Aorta (tissue), 5 donors: ENCODE measurements at regions of chr4 and their contacts with region 1.

Region 1: GRCh38 chr4:85084380-85085094 is 118.0 kb upstream of the WDFY3 start:
- DNase-seq: no peak
- ATAC-seq: peak; percentile 72
- H3K4me3 ChIP-seq: no peak overlapping the region
- H3K27ac ChIP-seq: no peak overlapping the region
- H3K4me1 ChIP-seq: no peaks in the 10 kb centered on the region
- H3K27me3 ChIP-seq: no peaks in the 10 kb centered on the region

Region 2: DNA sequence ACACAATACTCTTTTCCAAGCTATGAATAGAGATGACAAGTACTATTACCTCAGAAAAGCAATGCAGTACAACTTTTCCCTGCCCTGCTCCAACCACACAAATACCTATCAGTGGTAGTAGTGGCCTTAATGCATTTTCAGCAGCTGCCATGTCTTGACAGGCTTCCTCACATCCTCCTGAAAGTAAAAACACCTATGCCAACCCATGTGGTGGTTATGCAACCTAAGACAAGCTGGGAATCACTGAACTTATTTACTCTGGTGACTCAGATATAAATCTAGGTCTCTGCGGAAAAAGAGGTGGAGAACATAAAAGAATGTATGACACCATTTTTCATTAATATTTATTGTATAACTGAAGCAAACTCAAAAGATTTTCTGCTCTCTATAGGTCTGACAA is 132.5 kb before region 1 on chr4:
- intact Hi-C with region 1: no loop called
- DNase-seq: no peak
- ATAC-seq: no peak
- H3K4me3 ChIP-seq: no peak overlapping the region
- H3K27ac ChIP-seq: no peak overlapping the region
- H3K4me1 ChIP-seq: peaks cover 2 to 6% of the 10 kb centered on the region in 2 donors
- H3K27me3 ChIP-seq: no peaks in the 10 kb centered on the region

Region 3: GRCh38 chr4:85747882-85748491 is 663.5 kb after region 1 on chr4:
- intact Hi-C with region 1: loop called in 1 of 2 experiments (anchors 5 kb)
- DNase-seq: no peak
- ATAC-seq: peak; percentile 85
- H3K4me3 ChIP-seq: no peak overlapping the region
- H3K27ac ChIP-seq: no peak overlapping the region
- H3K4me1 ChIP-seq: no peaks in the 10 kb centered on the region
- H3K27me3 ChIP-seq: no peaks in the 10 kb centered on the region

Region 4: DNA sequence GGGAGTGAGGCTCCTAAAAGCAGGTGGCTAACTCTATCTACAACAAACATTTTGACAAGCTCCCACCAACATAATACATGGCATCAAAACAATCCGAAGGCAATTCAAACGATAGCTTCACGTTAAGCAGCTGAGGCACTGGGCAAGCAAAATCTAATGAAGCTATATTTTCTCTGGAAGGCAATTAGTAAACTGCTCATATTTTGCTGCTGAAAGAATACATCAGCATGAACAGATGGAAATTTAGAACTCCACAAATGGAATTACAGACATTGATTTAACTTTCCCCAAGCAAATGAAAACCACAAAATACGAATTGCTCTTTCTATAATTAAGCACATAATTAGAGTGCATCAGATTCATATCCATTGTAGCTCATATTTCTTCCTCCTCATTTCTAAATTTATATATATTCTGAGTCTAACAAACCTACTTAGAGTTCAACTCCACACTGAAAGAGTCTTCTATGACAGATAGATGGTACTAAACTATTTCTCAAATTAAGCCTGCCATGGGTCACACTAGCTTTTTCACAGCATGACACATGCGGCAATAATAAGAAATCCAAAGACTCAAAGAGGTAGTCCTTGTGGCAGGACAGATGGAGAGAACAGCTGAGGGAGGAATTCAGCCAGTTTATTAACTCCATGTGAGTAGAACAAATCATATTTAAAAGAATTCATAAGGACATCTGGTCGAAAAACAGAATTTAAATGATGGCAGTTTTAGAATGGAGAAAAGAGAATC is 969.9 kb after region 1 on chr4:
- intact Hi-C with region 1: loop called in 1 of 2 experiments (anchors 5 kb)
- DNase-seq: no peak
- ATAC-seq: no peak
- H3K4me3 ChIP-seq: no peak overlapping the region
- H3K27ac ChIP-seq: no peak overlapping the region
- H3K4me1 ChIP-seq: no peaks in the 10 kb centered on the region
- H3K27me3 ChIP-seq: no peaks in the 10 kb centered on the region